Cardiac septum (tissue), 1 donor: ENCODE measurements at regions of chr7 and their contacts with region 1.

Region 1: DNA sequence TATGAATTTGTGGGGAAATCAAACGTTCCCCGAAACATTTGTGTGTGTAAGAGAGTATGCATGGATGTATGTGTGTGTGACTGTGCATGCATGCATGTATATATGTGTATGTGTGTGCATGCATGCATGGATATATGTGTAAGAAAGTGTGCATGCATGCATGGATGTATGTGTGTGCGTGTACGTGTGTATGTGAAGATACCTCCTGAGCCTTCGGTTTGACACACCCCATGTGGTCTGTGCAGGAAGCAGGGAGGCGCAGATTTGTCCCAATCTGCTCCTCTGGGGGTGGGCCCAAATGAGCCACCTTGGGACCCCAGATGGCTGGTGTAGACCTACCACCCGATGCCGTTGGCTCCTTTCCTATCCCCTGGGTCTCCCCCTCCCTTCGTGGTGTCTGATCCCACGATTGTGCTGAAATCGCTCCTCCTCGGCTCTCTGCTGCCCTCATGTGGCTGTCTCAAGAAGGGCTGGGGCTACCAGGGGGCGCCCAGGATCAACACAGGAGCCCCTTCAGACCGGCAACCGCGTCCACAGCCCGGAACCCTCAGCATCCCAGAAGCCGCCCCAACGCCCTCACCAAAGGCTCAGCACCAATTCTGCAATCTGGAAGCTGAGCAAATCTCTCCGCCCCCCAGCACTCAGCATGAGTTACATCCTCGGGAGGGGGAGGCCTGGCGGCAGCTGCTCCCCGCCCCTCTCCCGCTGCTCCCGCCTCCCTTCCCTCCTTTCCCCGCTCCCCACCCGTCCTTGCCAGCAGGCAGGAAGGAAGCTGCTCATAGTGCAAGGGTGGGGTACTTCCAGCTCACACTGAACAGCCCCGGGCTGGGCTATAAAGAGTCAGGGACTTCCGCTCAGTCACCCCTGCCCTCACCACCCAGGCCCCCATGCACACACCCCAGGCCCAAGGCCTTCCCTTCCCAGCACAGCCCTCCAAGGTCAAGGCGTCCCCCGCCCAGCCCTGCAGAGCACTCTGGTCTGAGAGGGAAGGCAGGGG is 2.3 kb upstream of the NOS3 start:
- DNase-seq: peak; percentile 87

Region 2: GRCh38 chr7:150778738-150779301 is 209.7 kb before region 1 on chr7:
- intact Hi-C with region 1: loop called (anchors 2 kb)
- DNase-seq: no peak

Region 3: GRCh38 chr7:150898475-150899011 is 90.0 kb before region 1 on chr7:
- intact Hi-C with region 1: loop called (anchors 1 kb)
- DNase-seq: peak; percentile 91

Region 4: DNA sequence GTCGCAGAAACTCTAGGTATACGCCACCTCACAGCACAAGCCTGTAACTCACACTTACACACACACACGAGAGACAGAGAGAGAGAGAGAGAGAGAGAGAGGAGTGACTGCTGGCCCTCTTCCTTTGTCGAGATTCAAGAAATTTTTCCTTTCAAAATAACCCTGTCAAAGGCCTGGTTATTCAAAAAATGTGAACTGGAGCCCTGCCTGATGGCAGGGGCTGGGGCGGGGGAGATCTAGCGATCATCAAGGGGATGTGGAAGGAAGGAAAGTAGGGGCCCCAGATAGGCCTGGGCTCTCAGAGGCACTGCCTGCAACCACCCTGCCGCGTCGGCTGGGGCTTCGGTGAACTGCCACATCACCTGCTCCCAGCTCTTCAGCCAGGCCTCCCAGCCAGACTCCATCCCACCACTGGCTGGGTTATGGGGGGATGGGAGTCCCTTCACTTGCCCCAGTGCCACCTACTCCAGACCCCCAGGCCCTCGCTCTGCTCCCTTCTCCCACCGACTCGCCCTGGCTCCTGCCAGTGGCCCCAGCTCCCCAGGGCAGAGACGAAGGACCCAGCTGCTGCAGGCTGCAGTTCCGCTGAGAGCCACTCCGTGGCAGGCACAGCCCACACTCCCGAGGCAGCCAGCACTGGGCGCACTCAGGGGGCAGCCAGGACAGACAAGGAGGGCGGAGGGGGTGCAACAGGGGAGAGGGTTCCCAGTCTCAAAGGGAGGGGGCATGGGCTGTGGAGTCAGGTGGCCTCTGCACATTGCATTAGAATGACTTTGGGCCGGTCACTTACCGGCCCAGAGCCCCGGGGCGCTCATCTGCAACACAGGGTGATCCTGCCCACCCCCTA is 25.8 kb before region 1 on chr7:
- intact Hi-C with region 1: loop called (anchors 1 kb)
- DNase-seq: no peak